ENCODE measurements at regions of chr11 and their contacts with region 1.

Region 1: DNA sequence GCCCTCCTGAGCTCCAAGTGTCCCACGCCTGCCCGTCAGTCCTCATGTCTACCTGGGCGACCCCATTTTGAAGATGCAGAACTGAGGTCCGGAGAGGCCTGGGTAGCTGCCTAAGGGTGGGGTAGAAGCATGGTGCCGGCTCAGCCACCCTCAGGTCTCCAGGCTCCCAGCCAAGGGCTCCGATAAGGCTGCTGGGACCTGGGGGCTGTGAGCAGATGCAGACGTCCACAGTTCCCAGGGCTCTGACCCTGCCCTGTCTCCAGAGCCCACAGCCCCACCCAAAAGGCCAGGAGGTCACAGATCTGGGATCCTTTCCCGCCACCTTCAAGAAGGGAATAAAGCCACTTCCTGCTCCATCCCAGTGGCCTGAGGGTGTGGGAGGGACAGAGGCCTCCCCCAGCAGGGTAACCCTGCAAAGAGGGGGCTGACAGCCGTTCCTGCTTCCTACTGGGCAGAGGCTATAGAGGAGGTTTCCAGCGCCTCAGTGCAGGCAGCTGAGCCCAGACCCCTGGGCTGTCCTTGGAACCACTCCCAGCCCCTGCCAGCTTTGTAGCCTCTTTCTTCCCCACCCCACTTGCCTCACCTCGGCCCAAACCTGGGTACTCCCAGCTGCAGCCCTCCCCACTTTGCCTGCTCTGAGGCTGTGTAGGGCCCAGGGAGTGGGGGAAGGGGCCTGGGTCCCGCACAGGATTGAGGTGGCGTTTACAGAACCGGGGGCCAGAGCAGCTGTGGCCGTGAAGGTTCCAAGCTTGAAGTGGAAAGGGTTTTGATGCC is 85.5 kb downstream of the CDKN1C start:
- DNase-seq: peak in 1 of 2 donors; percentile 37
- H3K4me3 ChIP-seq: no peak overlapping the region
- H3K27ac ChIP-seq: no peak overlapping the region
- H3K4me1 ChIP-seq: no peaks in the 10 kb centered on the region
- H3K27me3 ChIP-seq: no peaks in the 10 kb centered on the region
- CTCF ChIP-seq: no peak
- POLR2A ChIP-seq: no peak

Region 2: GRCh38 chr11:2878782-2879181 is 78.7 kb after region 1 on chr11:
- intact Hi-C with region 1: loop called (anchors 2 kb)
- DNase-seq: no peak
- H3K4me3 ChIP-seq: no peak overlapping the region
- H3K27ac ChIP-seq: no peak overlapping the region
- H3K4me1 ChIP-seq: peaks cover 0 to 7% of the 10 kb centered on the region in 2 donors
- H3K27me3 ChIP-seq: no peaks in the 10 kb centered on the region
- CTCF ChIP-seq: no peak
- POLR2A ChIP-seq: no peak

Region 3: GRCh38 chr11:3049430-3050243 is 249.6 kb after region 1 on chr11:
- intact Hi-C with region 1: no loop called
- DNase-seq: peak; percentile 73
- H3K4me3 ChIP-seq: peak overlapping the region in 1 of 3 donors; percentile 21
- H3K27ac ChIP-seq: peak overlapping the region; percentile 81 to 94
- H3K4me1 ChIP-seq: peaks cover 8 to 9% of the 10 kb centered on the region in 2 donors
- H3K27me3 ChIP-seq: no peaks in the 10 kb centered on the region
- CTCF ChIP-seq: peak in 1 of 3 donors; percentile 34
- POLR2A ChIP-seq: no peak

Measured in breast epithelium (tissue), 4 donors.